ENCODE measurements at regions of chr1 and their contacts with region 1.

Region 1: DNA sequence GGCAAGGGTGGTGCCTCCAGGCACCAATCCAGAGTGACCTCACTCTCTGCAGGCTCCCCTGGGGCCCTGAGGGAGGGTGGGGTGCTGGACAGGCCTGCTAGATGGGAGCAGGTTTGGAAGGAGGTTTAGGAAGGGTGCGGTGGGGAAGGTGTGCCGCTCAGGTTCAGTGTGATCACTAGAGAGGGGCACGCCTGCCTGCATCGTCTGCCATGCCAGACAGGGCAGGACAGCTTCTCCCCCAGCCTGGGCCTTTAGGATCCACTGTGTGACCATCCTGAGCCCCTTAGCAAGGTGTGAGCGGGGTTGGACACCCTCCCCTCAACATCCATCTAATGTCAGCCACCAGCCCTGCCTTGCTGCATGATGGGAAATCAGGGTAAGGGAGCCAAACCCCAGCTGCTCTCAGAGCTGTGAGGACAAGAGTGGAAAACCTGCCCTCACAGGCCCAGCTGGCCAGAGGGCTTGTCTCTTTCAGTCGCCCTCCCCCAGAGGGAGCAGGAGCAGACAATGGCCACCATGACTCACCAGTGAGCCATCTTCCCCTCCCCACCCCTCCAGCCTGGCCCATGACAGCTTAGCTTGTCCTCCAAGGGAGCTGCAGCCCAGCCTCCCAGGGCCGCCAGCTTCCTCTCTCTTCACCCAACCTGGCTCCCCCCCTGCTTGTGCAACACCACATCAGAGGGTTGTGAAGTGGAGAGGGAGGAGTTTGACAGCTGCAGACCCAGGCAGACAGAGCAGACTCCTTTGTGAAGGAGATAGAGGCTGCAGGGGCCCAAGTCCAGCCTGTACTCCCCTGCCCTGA is 37.0 kb downstream of the NUAK2 start:
- DNase-seq: peak; percentile 65 to 92 (median 89)
- ATAC-seq: peak; percentile 79
- H3K4me3 ChIP-seq: peak overlapping the region; percentile 51
- H3K4me3 Mint-ChIP-seq: peak overlapping the region; percentile 63 to 89 (median 80)
- H3K27ac ChIP-seq: peak overlapping the region; percentile 83
- H3K27ac Mint-ChIP-seq: peak overlapping the region; percentile 90 to 99 (median 97)
- H3K4me1 ChIP-seq: peaks cover 61 to 78% of the 10 kb centered on the region in 2 donors
- H3K4me1 Mint-ChIP-seq: peaks cover 67 to 95% (median 80%) of the 10 kb centered on the region in 7 donors
- H3K27me3 ChIP-seq: no peaks in the 10 kb centered on the region
- H3K27me3 Mint-ChIP-seq: peaks cover 0 to 20% (median 0%) of the 10 kb centered on the region in 5 donors

Region 2: GRCh38 chr1:204411451-204412204 is 872.9 kb before region 1 on chr1 and contains the start of gene PPP1R15B:
- CTCF ChIA-PET with region 1: no interaction called
- POLR2A ChIA-PET with region 1: no interaction called
- intact Hi-C with region 1: loop called in 1 of 2 experiments (anchors 10 kb)
- DNase-seq: peak; percentile 92 to 99 (median 98)
- ATAC-seq: peak; percentile 91
- H3K4me3 ChIP-seq: peak within 1 kb of the TSS; percentile 99
- H3K4me3 Mint-ChIP-seq: peak within 1 kb of the TSS; percentile 92 to 99 (median 97)
- H3K27ac ChIP-seq: peak within 1 kb of the TSS; percentile 100
- H3K27ac Mint-ChIP-seq: peak within 1 kb of the TSS; percentile 97 to 100 (median 99)
- H3K4me1 ChIP-seq: peaks cover 0 to 5% of the 10 kb centered on the region in 2 donors
- H3K4me1 Mint-ChIP-seq: peaks cover 8 to 23% (median 14%) of the 10 kb centered on the region in 7 donors
- H3K27me3 ChIP-seq: no peaks in the 10 kb centered on the region
- H3K27me3 Mint-ChIP-seq: no peaks in the 10 kb centered on the region
- total RNA-seq, gene PPP1R15B: 69.5 to 175 (median 73.0) TPM

Region 3: GRCh38 chr1:205273551-205273982 is 11.0 kb before region 1 on chr1:
- CTCF ChIA-PET with region 1: interaction called, 148 read pairs
- POLR2A ChIA-PET with region 1: interaction called, 293 read pairs
- intact Hi-C with region 1: loop called (anchors 1 kb)
- DNase-seq: peak; percentile 77 to 87 (median 80)
- ATAC-seq: peak; percentile 93
- H3K4me3 ChIP-seq: peak overlapping the region; percentile 35
- H3K4me3 Mint-ChIP-seq: peak overlapping the region in 9 of 10 donors; percentile 60 to 77 (median 73)
- H3K27ac ChIP-seq: no peak overlapping the region
- H3K27ac Mint-ChIP-seq: peak overlapping the region in 8 of 9 donors; percentile 70 to 93 (median 80)
- H3K4me1 ChIP-seq: peaks cover 22 to 42% of the 10 kb centered on the region in 2 donors
- H3K4me1 Mint-ChIP-seq: peaks cover 16 to 48% (median 36%) of the 10 kb centered on the region in 7 donors
- H3K27me3 ChIP-seq: no peaks in the 10 kb centered on the region
- H3K27me3 Mint-ChIP-seq: peaks cover 0 to under 1% (median 0%) of the 10 kb centered on the region in 5 donors

Region 4: DNA sequence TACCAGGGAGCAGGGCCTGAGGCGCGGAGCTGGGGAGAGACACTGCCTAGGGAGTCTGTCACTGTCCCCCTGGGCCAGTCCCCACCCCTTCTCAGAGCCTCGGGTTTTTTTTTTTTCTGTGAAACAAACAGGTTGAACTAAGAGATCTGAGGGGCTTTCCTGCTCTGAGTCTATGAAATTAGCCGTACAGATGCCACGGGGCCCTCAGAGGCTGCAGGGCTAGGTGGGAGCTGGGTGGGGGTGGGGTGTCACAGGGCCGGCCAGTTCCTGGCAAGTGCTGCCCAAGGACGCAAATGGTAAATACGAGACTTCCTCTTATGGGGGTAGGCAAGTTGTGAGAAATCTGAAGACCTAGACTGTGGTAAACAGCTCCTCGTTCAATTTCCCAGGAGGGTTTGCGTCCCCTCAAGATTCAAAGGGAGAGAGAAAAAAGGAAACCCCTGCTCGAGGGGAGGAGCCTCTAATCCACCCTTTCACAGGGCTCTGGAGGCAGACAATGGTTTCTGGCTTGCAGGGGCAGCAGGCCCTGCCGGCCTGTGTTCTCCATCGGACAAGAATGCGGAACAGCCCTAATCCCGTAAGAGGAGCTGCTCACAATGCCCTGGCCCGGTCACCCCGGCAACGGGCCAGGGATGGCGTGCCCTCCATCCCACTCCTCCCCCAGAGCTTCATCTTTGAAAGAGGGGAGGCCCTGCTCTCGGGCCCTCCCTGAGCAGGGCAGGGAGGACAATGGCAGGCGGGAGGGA is 29.2 kb after region 1 on chr1:
- CTCF ChIA-PET with region 1: interaction called, 955 read pairs
- POLR2A ChIA-PET with region 1: interaction called, 1,119 read pairs
- intact Hi-C with region 1: loop called (anchors 1 kb)
- DNase-seq: peak in 8 of 9 donors; percentile 39 to 67 (median 53)
- ATAC-seq: peak; percentile 83
- H3K4me3 ChIP-seq: peak overlapping the region; percentile 61
- H3K4me3 Mint-ChIP-seq: peak overlapping the region; percentile 86 to 100 (median 92)
- H3K27ac ChIP-seq: peak overlapping the region; percentile 89
- H3K27ac Mint-ChIP-seq: peak overlapping the region; percentile 89 to 99 (median 96)
- H3K4me1 ChIP-seq: peaks cover 52 to 85% of the 10 kb centered on the region in 2 donors
- H3K4me1 Mint-ChIP-seq: peaks cover 69 to 99% (median 96%) of the 10 kb centered on the region in 7 donors
- H3K27me3 ChIP-seq: no peaks in the 10 kb centered on the region
- H3K27me3 Mint-ChIP-seq: peaks cover 0 to 2% (median 0%) of the 10 kb centered on the region in 5 donors

Region 5: DNA sequence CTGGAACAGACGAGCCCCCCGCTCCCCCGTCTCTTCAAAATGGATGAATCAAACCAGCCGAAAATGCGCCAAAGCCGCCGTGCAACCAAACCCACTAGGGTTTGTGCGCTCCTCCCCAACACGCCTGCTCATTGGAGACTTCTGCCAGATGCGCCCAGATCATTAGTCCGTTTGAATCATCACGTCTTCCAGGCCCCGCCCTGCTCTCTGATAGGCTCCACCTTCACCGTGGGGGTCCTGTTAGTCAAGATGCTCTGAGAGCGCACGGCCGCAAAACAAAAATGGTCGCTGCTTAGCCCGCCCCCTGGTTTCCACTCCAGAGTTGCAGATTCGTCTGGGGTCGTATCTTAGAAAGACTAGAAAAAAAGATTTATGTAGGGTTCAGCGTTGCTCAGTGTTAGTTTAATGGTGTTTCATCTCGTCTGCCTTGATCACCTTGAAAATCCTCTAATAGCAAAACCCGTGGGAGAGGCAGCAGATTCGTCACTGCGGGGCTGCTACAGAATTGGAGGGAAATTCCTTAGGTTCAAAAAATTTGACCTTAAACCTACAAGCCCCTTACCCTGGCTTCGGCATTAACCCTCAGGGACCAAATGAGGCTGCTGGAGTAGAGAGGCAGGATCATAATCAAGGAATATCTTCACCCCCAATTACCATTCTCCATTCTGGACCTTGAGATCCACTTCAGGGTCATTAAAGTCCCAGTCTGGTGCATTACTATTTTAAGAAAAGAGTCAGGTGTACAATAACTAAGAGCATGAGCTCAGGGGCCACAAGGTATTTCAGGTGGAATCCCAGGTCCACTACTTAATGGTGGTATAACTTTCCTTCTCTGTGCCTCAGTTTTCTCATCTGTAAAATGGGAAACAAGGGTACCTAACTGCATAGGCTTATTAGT is 465.8 kb after region 1 on chr1 and contains the start of gene NUCKS1:
- CTCF ChIA-PET with region 1: no interaction called
- POLR2A ChIA-PET with region 1: no interaction called
- intact Hi-C with region 1: loop called in 1 of 2 experiments (anchors 10 kb)
- DNase-seq: peak; percentile 79 to 99 (median 97)
- ATAC-seq: peak; percentile 86
- H3K4me3 ChIP-seq: peak within 1 kb of the TSS; percentile 81
- H3K4me3 Mint-ChIP-seq: peak within 1 kb of the TSS; percentile 83 to 99 (median 96)
- H3K27ac ChIP-seq: peak within 1 kb of the TSS; percentile 95
- H3K27ac Mint-ChIP-seq: peak within 1 kb of the TSS; percentile 96 to 100 (median 98)
- H3K4me1 ChIP-seq: peaks cover 6 to 10% of the 10 kb centered on the region in 2 donors
- H3K4me1 Mint-ChIP-seq: peaks cover 24 to 49% (median 39%) of the 10 kb centered on the region in 7 donors
- H3K27me3 ChIP-seq: no peaks in the 10 kb centered on the region
- H3K27me3 Mint-ChIP-seq: peaks cover 0 to 3% (median 0%) of the 10 kb centered on the region in 5 donors
- total RNA-seq, gene NUCKS1: 70.4 to 164 (median 122) TPM

Region 6: DNA sequence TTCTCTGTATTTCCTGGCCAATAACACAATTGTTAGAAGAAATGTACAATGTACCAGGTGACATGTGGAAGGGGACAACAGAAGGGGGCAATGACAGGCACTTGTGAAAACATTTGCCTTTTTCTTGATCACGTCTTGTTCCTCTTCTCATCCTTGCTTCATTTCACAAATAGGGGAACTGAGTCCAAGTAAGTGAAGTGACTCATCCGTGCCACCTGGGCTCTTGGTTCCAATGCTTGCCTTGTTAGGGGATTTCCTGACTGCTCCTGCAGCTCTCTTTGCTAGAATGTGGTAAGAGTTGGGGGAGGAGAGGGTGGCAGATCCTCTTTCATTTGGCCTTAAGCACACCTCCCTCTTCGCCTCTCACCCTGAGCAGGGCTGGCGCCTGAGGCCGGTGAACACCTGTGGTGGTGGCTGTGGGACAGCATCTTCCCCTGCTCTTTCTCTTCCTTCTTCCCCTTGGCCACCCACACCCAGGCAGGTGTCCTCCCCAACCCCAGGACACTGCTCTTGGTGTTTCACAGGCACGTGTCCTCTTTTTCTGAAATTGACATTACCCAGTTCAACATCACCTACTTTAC is 766.2 kb after region 1 on chr1:
- CTCF ChIA-PET with region 1: no interaction called
- POLR2A ChIA-PET with region 1: no interaction called
- intact Hi-C with region 1: no loop called
- DNase-seq: peak in 6 of 9 donors; percentile 3 to 54 (median 22)
- ATAC-seq: peak; percentile 94
- H3K4me3 ChIP-seq: no peak overlapping the region
- H3K4me3 Mint-ChIP-seq: peak overlapping the region in 7 of 10 donors; percentile 13 to 63 (median 18)
- H3K27ac ChIP-seq: no peak overlapping the region
- H3K27ac Mint-ChIP-seq: peak overlapping the region in 6 of 9 donors; percentile 11 to 90 (median 53)
- H3K4me1 ChIP-seq: peaks cover 0 to 7% of the 10 kb centered on the region in 2 donors
- H3K4me1 Mint-ChIP-seq: peaks cover 7 to 37% (median 18%) of the 10 kb centered on the region in 7 donors
- H3K27me3 ChIP-seq: no peaks in the 10 kb centered on the region
- H3K27me3 Mint-ChIP-seq: peaks cover 0 to 17% (median 0%) of the 10 kb centered on the region in 5 donors